B cell (primary cell): ENCODE measurements at regions of chr2 and their contacts with region 1.

Region 1: GRCh38 chr2:88831792-88832248 is 140.3 kb downstream of the RPIA start:
- DNase-seq: peak; percentile 87
- ATAC-seq: peak; percentile 76
- H3K4me3 ChIP-seq: peak overlapping the region in 4 of 5 experiments; percentile 31 to 66 (median 48)
- H3K4me3 Mint-ChIP-seq: peak overlapping the region; percentile 86
- H3K27ac ChIP-seq: peak overlapping the region; percentile 98 to 100
- H3K27ac Mint-ChIP-seq: peak overlapping the region; percentile 93
- H3K4me1 ChIP-seq: peaks cover 50 to 59% of the 10 kb centered on the region in 2 donors
- H3K4me1 Mint-ChIP-seq: peaks cover 65% of the 10 kb centered on the region
- H3K27me3 ChIP-seq: no peaks in the 10 kb centered on the region
- H3K27me3 Mint-ChIP-seq: no peaks in the 10 kb centered on the region
- CTCF ChIP-seq: peak; percentile 88

Region 2: DNA sequence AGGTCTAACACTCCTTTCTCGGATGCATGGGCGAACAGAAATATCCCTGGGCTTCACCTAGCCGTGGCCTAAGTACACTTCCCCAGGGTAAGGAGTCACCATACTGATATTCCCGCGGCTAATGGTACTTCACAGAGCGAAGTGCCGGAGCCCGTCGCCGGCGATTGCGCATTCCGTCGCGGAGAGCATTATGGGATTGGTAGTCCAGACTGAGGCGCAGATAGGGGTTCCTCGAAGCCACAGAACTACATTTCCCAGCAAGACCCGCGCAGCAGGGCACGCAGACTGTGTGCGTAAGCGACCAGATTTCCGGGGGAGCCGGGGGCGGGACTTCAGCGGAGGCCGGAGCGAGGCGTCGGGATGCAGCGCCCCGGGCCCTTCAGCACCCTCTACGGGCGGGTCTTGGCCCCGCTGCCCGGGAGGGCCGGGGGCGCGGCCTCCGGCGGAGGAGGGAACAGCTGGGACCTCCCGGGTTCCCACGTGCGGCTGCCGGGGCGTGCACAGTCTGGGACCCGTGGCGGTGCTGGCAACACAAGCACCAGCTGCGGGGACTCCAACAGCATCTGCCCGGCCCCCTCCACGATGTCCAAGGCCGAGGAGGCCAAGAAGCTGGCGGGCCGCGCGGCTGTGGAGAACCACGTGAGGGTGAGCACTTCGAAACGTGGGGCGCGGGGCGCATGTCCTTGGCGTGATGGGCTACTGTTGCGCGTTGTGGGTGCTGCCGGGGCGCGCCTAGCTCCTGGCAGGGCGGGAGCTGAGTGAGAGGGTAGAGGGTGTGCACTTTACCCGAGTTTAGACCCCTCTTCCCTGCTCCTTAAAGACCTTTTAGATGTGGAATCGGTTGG is 140.3 kb before region 1 on chr2 and contains the start of gene RPIA:
- CTCF ChIA-PET with region 1: interaction called, 3 read pairs
- POLR2A ChIA-PET with region 1: no interaction called
- intact Hi-C with region 1: loop called (anchors 5 kb)
- DNase-seq: peak; percentile 99
- ATAC-seq: peak; percentile 91
- H3K4me3 ChIP-seq: peak within 1 kb of the TSS; percentile 85 to 99 (median 95)
- H3K4me3 Mint-ChIP-seq: peak within 1 kb of the TSS; percentile 98
- H3K27ac ChIP-seq: peak within 1 kb of the TSS; percentile 68 to 69
- H3K27ac Mint-ChIP-seq: peak within 1 kb of the TSS; percentile 90
- H3K4me1 ChIP-seq: peaks cover 23 to 27% of the 10 kb centered on the region in 2 donors
- H3K4me1 Mint-ChIP-seq: peaks cover 52% of the 10 kb centered on the region
- H3K27me3 ChIP-seq: no peaks in the 10 kb centered on the region
- H3K27me3 Mint-ChIP-seq: no peaks in the 10 kb centered on the region
- CTCF ChIP-seq: peak; percentile 66
- total RNA-seq, gene RPIA: 19.7 and 22.8 TPM in 2 replicates

Region 3: GRCh38 chr2:88765154-88765900 is 66.5 kb before region 1 on chr2:
- CTCF ChIA-PET with region 1: no interaction called
- POLR2A ChIA-PET with region 1: no interaction called
- intact Hi-C with region 1: loop called (anchors 10 kb)
- DNase-seq: peak; percentile 67
- ATAC-seq: peak; percentile 61
- H3K4me3 ChIP-seq: peak overlapping the region in 4 of 5 experiments; percentile 15 to 55 (median 46)
- H3K4me3 Mint-ChIP-seq: peak overlapping the region; percentile 89
- H3K27ac ChIP-seq: no peak overlapping the region
- H3K27ac Mint-ChIP-seq: peak overlapping the region; percentile 22
- H3K4me1 ChIP-seq: peaks cover 13 to 14% of the 10 kb centered on the region in 2 donors
- H3K4me1 Mint-ChIP-seq: peaks cover 12% of the 10 kb centered on the region
- H3K27me3 ChIP-seq: peaks cover 0 to 14% (median 0%) of the 10 kb centered on the region in 4 experiments
- H3K27me3 Mint-ChIP-seq: peaks cover 5% of the 10 kb centered on the region
- CTCF ChIP-seq: no peak

Region 4: DNA sequence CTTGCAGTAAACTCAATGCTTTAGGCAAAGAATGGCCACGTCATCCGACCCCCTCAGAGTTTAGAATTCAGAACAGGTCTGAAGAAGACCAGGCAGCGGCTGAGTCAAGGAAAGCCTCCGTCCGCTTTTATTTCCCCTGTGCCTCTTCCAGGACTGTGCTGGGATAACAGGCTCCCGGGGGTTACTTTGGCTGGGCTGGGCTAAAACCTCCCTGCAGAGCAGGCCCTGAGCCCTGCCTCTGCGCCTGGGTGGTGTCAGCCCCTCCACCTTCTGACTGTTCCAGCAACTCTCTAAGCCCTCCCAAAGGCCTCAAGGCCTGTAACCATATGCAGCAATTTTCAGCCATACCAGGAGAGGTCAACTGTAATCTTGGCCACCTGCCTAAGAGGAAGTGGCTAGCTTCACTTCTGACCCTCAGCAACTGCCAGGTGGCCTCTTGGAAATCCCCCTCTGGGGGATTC is 26.2 kb after region 1 on chr2:
- CTCF ChIA-PET with region 1: interaction called, 577 read pairs
- POLR2A ChIA-PET with region 1: interaction called, 509 read pairs
- intact Hi-C with region 1: loop called (anchors 1 kb)
- DNase-seq: peak; percentile 75
- ATAC-seq: peak; percentile 37
- H3K4me3 ChIP-seq: peak overlapping the region; percentile 62 to 95 (median 86)
- H3K4me3 Mint-ChIP-seq: peak overlapping the region; percentile 93
- H3K27ac ChIP-seq: peak overlapping the region; percentile 90 to 98
- H3K27ac Mint-ChIP-seq: peak overlapping the region; percentile 92
- H3K4me1 ChIP-seq: peaks cover 38 to 43% of the 10 kb centered on the region in 2 donors
- H3K4me1 Mint-ChIP-seq: peaks cover 54% of the 10 kb centered on the region
- H3K27me3 ChIP-seq: no peaks in the 10 kb centered on the region
- H3K27me3 Mint-ChIP-seq: no peaks in the 10 kb centered on the region
- CTCF ChIP-seq: no peak

Region 5: GRCh38 chr2:88880441-88880953 is 48.7 kb after region 1 on chr2:
- CTCF ChIA-PET with region 1: interaction called, 114 read pairs
- POLR2A ChIA-PET with region 1: interaction called, 5 read pairs
- intact Hi-C with region 1: loop called (anchors 1 kb)
- DNase-seq: peak; percentile 72
- ATAC-seq: peak; percentile 72
- H3K4me3 ChIP-seq: peak overlapping the region in 4 of 5 experiments; percentile 19 to 56 (median 42)
- H3K4me3 Mint-ChIP-seq: peak overlapping the region; percentile 78
- H3K27ac ChIP-seq: peak overlapping the region; percentile 73 to 83
- H3K27ac Mint-ChIP-seq: peak overlapping the region; percentile 87
- H3K4me1 ChIP-seq: peaks cover 29 to 56% of the 10 kb centered on the region in 2 donors
- H3K4me1 Mint-ChIP-seq: peaks cover 54% of the 10 kb centered on the region
- H3K27me3 ChIP-seq: no peaks in the 10 kb centered on the region
- H3K27me3 Mint-ChIP-seq: no peaks in the 10 kb centered on the region
- CTCF ChIP-seq: peak; percentile 62

Region 6: GRCh38 chr2:88919087-88919738 is 87.4 kb after region 1 on chr2:
- CTCF ChIA-PET with region 1: interaction called, 7 read pairs
- POLR2A ChIA-PET with region 1: no interaction called
- intact Hi-C with region 1: loop called (anchors 1 kb)
- DNase-seq: peak; percentile 29
- ATAC-seq: no peak
- H3K4me3 ChIP-seq: no peak overlapping the region
- H3K4me3 Mint-ChIP-seq: no peak overlapping the region
- H3K27ac ChIP-seq: no peak overlapping the region
- H3K27ac Mint-ChIP-seq: no peak overlapping the region
- H3K4me1 ChIP-seq: peaks cover 0 to 3% of the 10 kb centered on the region in 2 donors
- H3K4me1 Mint-ChIP-seq: peaks cover 4% of the 10 kb centered on the region
- H3K27me3 ChIP-seq: no peaks in the 10 kb centered on the region
- H3K27me3 Mint-ChIP-seq: no peaks in the 10 kb centered on the region
- CTCF ChIP-seq: peak; percentile 53

Region 7: DNA sequence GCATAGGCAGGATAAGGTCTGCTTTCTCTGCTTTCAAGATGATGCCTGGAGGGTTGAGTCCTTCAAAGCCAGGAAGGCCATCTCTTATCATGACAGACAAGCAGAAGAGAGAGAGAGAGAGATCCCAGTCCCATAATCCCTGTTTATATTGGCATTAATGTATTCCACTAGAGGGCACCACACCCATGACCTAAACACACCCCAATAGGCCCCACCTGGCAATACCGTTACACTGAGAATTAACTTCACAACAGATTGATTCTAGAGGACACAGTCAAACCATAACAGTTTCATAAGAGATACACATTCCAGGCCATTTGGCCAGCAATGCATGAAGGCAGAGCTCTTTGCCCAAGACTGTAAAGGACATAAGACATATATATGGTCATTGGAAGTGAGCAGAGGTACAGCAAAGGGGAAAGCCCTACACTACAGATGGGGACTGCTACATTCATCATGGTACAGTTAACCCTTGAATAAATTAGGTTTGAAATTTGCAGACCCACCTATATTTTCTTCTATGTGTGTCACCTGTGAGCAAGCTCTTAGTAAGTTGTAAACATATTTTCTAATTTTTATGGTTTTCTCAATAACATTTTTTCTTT is 1375.7 kb after region 1 on chr2:
- CTCF ChIA-PET with region 1: no interaction called
- POLR2A ChIA-PET with region 1: no interaction called
- intact Hi-C with region 1: loop called (anchors 2 kb)
- DNase-seq: peak; percentile 59
- ATAC-seq: peak; percentile 51
- H3K4me3 ChIP-seq: no peak overlapping the region
- H3K4me3 Mint-ChIP-seq: no peak overlapping the region
- H3K27ac ChIP-seq: no peak overlapping the region
- H3K27ac Mint-ChIP-seq: no peak overlapping the region
- H3K4me1 ChIP-seq: peaks cover 7 to 22% of the 10 kb centered on the region in 2 donors
- H3K4me1 Mint-ChIP-seq: peaks cover 27% of the 10 kb centered on the region
- H3K27me3 ChIP-seq: peaks cover 0 to 3% (median 0%) of the 10 kb centered on the region in 4 experiments
- H3K27me3 Mint-ChIP-seq: peaks cover 15% of the 10 kb centered on the region
- CTCF ChIP-seq: peak; percentile 61